ENCODE measurements at regions of chr7 and their contacts with region 1.

Region 1: DNA sequence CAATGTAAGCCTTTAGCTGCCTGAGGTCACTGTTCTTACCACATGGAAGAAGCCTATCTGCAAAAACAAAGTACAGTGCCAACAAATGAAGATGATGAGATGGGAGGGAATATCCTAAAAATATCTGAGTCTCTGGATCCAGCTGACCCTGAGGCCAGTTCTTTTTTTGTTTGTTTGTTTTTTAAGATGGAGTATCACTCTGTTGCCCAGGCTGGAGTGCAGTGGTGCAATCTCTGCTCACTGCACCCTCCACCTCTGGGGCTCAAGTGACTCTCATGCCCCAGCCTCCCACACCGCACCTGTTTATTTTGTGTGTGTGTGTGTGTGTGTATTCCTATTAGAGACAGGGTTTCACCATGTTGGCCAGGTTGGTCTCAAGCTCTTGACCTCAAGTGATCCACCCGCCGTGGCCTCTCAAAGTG is 44.9 kb downstream of the HYCC1 start:
- DNase-seq: no peak
- H3K4me3 Mint-ChIP-seq: no peak overlapping the region
- H3K27ac Mint-ChIP-seq: no peak overlapping the region
- H3K4me1 Mint-ChIP-seq: no peaks in the 10 kb centered on the region
- H3K27me3 Mint-ChIP-seq: no peaks in the 10 kb centered on the region

Region 2: DNA sequence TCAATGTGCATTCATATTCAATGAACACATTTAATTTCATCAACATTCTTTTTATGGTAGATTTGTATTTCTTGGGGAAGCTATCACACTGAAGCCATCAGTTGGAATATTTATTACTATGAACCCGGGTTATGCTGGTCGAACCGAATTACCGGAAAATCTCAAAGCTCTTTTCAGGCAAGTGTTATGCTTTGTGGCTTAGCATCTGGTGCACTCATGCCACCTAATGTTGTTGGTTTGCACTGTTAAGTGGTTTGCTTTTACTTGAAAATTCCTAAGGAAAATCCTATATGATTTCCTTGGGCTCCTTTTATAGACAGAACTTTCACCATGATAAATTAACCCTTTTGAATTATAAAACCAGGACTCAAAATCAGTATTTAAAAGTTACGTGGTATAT is 1278.3 kb before region 1 on chr7:
- CTCF ChIA-PET with region 1: no interaction called
- POLR2A ChIA-PET with region 1: no interaction called
- intact Hi-C with region 1: loop called (anchors 10 kb)
- DNase-seq: no peak
- H3K4me3 Mint-ChIP-seq: no peak overlapping the region
- H3K27ac Mint-ChIP-seq: no peak overlapping the region
- H3K4me1 Mint-ChIP-seq: no peaks in the 10 kb centered on the region
- H3K27me3 Mint-ChIP-seq: peaks cover 5% of the 10 kb centered on the region

Region 3: DNA sequence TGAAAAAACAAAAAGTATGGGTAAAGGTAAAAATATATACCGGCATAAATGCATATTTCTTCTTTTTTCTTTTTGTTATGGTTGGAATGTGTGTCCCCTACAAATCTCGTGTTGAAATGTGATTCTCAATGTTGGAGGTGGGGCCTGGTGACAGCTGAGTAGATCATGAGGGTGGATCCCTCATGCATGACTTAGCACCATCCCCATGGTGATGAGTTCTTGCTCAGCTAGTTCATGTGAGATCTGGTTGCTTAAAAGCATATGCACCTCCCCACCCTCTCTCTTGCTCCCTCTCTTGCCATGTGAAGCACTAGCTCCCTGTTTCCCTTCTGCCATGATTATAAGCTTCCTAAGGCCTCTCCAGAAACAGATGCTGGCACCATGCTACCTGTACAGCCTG is 48.3 kb before region 1 on chr7:
- CTCF ChIA-PET with region 1: no interaction called
- POLR2A ChIA-PET with region 1: no interaction called
- intact Hi-C with region 1: no loop called
- DNase-seq: no peak
- H3K4me3 Mint-ChIP-seq: no peak overlapping the region
- H3K27ac Mint-ChIP-seq: no peak overlapping the region
- H3K4me1 Mint-ChIP-seq: no peaks in the 10 kb centered on the region
- H3K27me3 Mint-ChIP-seq: no peaks in the 10 kb centered on the region